Naive thymus-derived CD4-positive, alpha-beta T cell (primary cell): ENCODE measurements at regions of chr2 and their contacts with region 1.

Region 1: DNA sequence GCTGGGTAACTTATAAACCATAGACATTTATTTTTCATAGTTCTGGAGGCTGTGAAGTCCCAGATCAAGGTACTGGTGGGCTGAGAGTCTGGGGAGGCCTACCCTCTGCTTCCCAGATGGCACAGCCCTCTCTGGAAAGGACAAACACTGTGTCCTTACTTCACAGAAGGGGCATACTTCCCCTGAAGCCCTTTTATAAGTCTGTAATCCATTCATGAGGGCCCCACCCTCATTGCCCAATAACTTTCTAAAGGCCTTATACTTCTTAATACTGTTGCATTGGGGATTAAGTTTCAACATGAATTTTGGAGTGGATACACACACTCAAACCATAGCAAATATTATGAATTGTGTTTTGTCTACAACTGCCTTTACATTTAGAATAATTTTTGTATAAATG is 36.0 kb downstream of the ATIC start:
- DNase-seq: no peak
- ATAC-seq: no peak
- H3K4me3 ChIP-seq: no peak overlapping the region
- H3K4me3 Mint-ChIP-seq: no peak overlapping the region
- H3K27ac ChIP-seq: no peak overlapping the region
- H3K27ac Mint-ChIP-seq: peak overlapping the region in 1 of 9 donors; percentile 25
- H3K4me1 ChIP-seq: no peaks in the 10 kb centered on the region
- H3K4me1 Mint-ChIP-seq: no peaks in the 10 kb centered on the region
- H3K27me3 ChIP-seq: no peaks in the 10 kb centered on the region
- H3K27me3 Mint-ChIP-seq: no peaks in the 10 kb centered on the region

Region 2: DNA sequence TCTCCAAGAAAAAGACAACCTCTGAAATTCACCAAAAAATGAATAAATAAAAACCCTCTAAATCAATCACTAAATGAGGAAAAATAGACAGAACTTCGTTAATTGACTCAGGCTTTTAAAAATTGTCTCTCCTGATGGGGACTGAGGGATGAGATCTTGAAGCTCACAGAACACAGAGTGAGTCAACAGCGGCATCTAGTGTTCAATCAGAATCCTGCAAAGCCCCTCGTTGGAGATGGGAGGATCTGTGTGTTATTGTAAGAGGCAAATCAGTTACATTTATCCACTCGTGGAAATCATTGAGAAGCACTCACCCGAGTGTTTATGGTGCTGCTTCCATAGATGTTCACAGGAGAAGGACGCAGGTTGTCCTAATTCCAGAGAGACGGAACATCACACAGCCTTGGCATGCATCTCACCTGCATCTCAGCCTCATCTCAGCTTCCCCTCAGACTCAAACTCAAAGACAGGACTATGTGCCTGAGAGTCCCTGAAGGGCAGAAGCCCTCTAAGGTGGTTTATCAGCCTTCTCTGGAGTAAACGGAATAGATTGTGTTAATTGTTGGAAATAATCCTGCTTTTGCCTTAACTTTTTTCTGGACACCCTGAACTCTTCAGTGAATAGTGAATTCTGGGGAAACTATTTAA is 583.5 kb after region 1 on chr2:
- CTCF ChIA-PET with region 1: no interaction called
- POLR2A ChIA-PET with region 1: no interaction called
- intact Hi-C with region 1: loop called in 1 of 2 experiments (anchors 5 kb)
- DNase-seq: peak; percentile 9 to 53 (median 38)
- ATAC-seq: peak; percentile 66
- H3K4me3 ChIP-seq: no peak overlapping the region
- H3K4me3 Mint-ChIP-seq: no peak overlapping the region
- H3K27ac ChIP-seq: no peak overlapping the region
- H3K27ac Mint-ChIP-seq: no peak overlapping the region
- H3K4me1 ChIP-seq: no peaks in the 10 kb centered on the region
- H3K4me1 Mint-ChIP-seq: peaks cover 0 to 6% (median 0%) of the 10 kb centered on the region in 7 donors
- H3K27me3 ChIP-seq: no peaks in the 10 kb centered on the region
- H3K27me3 Mint-ChIP-seq: peaks cover 0 to 10% (median 0%) of the 10 kb centered on the region in 5 donors

Region 3: GRCh38 chr2:216160786-216161185 is 812.9 kb after region 1 on chr2:
- CTCF ChIA-PET with region 1: no interaction called
- POLR2A ChIA-PET with region 1: no interaction called
- intact Hi-C with region 1: no loop called
- DNase-seq: no peak
- ATAC-seq: no peak
- H3K4me3 ChIP-seq: no peak overlapping the region
- H3K4me3 Mint-ChIP-seq: no peak overlapping the region
- H3K27ac ChIP-seq: no peak overlapping the region
- H3K27ac Mint-ChIP-seq: peak overlapping the region in 4 of 9 donors; percentile 16 to 57 (median 38)
- H3K4me1 ChIP-seq: no peaks in the 10 kb centered on the region
- H3K4me1 Mint-ChIP-seq: peaks cover 10 to 65% (median 48%) of the 10 kb centered on the region in 7 donors
- H3K27me3 ChIP-seq: no peaks in the 10 kb centered on the region
- H3K27me3 Mint-ChIP-seq: no peaks in the 10 kb centered on the region